ENCODE measurements at regions of chr15 and their contacts with region 1.

Region 1: GRCh38 chr15:58980351-58980939 is 7.0 kb upstream of the RNF111 start:
- DNase-seq: no peak
- ATAC-seq: peak; percentile 39
- H3K4me3 ChIP-seq: peak overlapping the region; percentile 37
- H3K27ac ChIP-seq: peak overlapping the region; percentile 83; the same call in 1 of the 2 replicates
- H3K4me1 ChIP-seq: peaks cover 34% of the 10 kb centered on the region
- H3K27me3 ChIP-seq: no peaks in the 10 kb centered on the region
- CTCF ChIP-seq: peak; percentile 19 to 60 (median 43); a peak in 3 of 6 replicates
- EP300 ChIP-seq: no peak
- POLR2A ChIP-seq: no peak
- RAD21 ChIP-seq: peak; percentile 67

Region 2: DNA sequence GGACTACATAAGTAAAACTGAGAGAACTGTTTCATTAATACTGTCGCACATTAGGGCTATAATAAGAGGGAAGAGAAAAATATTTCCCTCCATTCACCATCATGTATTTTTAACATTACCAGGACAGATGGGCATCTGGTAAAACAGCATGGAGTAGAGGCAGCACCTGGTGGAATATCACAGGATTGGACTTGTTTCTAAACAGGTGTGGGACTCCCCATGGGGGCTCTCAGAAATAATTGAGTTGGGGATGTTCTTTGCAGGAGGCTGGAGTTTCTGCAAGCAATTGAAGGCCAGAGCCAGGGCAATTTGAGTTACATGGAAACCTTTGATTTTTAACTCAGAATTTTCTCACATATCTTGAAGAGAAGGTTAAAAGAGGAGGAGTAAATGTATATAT is 217.7 kb before region 1 on chr15:
- CTCF ChIA-PET with region 1: no interaction called
- POLR2A ChIA-PET with region 1: no interaction called
- RAD21 ChIA-PET with region 1: no interaction called
- SMC1A ChIA-PET with region 1: no interaction called
- in situ Hi-C with region 1: no loop called
- intact Hi-C with region 1: no loop called
- DNase-seq: no peak
- ATAC-seq: no peak
- H3K4me3 ChIP-seq: no peak overlapping the region
- H3K27ac ChIP-seq: no peak overlapping the region
- H3K4me1 ChIP-seq: no peaks in the 10 kb centered on the region
- H3K27me3 ChIP-seq: no peaks in the 10 kb centered on the region
- CTCF ChIP-seq: no peak
- EP300 ChIP-seq: no peak
- POLR2A ChIP-seq: no peak
- RAD21 ChIP-seq: no peak

Region 3: DNA sequence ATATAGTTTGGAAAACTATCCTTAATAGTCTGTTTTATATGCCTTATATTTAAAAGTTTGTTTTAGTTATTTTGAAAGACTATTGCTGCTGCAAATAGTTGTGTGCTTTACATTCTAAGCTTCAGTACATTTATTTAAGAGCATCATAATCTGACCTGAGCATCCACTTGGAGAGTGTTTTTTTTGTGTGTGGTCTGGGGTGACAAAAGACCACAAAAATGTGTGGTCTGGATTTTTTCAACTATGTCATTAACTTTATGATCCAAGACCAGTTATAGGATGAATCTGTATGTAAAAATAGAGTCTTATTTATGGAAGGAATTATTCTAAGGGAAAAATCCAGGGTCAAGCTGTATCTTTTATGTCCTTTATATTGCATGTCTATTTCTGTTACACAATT is 124.4 kb before region 1 on chr15:
- CTCF ChIA-PET with region 1: no interaction called
- POLR2A ChIA-PET with region 1: no interaction called
- RAD21 ChIA-PET with region 1: no interaction called
- SMC1A ChIA-PET with region 1: no interaction called
- in situ Hi-C with region 1: no loop called
- intact Hi-C with region 1: no loop called
- DNase-seq: no peak
- ATAC-seq: no peak
- H3K4me3 ChIP-seq: no peak overlapping the region
- H3K27ac ChIP-seq: no peak overlapping the region
- H3K4me1 ChIP-seq: no peaks in the 10 kb centered on the region
- H3K27me3 ChIP-seq: no peaks in the 10 kb centered on the region
- CTCF ChIP-seq: no peak
- EP300 ChIP-seq: no peak
- POLR2A ChIP-seq: no peak
- RAD21 ChIP-seq: no peak

Region 4: DNA sequence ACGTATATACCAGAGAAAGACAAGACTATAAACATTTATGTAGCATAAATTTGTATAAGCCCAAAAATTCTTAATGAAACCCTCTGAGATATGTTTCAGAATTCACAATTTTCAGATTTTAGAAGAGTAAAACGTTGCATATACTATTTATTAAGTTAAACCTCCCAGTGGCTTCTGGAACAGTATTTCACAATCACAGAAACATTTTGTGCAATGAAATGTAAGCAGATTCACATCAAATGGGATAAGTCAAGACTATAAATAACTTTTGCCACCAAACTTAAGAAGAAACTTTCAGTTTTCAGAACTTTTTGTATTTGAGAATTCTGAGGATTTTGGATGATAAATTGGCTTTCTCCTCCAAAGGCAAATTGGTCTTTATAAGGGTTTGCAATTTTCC is 56.1 kb before region 1 on chr15:
- CTCF ChIA-PET with region 1: no interaction called
- POLR2A ChIA-PET with region 1: no interaction called
- RAD21 ChIA-PET with region 1: no interaction called
- SMC1A ChIA-PET with region 1: no interaction called
- in situ Hi-C with region 1: no loop called
- intact Hi-C with region 1: no loop called
- DNase-seq: no peak
- ATAC-seq: no peak
- H3K4me3 ChIP-seq: peak overlapping the region; percentile 7; the same call in 1 of the 2 replicates
- H3K27ac ChIP-seq: peak overlapping the region; percentile 14; the same call in 1 of the 2 replicates
- H3K4me1 ChIP-seq: peaks cover 2% of the 10 kb centered on the region; the same call in 1 of the 2 replicates
- H3K27me3 ChIP-seq: no peaks in the 10 kb centered on the region
- CTCF ChIP-seq: no peak
- EP300 ChIP-seq: no peak
- POLR2A ChIP-seq: no peak
- RAD21 ChIP-seq: no peak

Region 5: DNA sequence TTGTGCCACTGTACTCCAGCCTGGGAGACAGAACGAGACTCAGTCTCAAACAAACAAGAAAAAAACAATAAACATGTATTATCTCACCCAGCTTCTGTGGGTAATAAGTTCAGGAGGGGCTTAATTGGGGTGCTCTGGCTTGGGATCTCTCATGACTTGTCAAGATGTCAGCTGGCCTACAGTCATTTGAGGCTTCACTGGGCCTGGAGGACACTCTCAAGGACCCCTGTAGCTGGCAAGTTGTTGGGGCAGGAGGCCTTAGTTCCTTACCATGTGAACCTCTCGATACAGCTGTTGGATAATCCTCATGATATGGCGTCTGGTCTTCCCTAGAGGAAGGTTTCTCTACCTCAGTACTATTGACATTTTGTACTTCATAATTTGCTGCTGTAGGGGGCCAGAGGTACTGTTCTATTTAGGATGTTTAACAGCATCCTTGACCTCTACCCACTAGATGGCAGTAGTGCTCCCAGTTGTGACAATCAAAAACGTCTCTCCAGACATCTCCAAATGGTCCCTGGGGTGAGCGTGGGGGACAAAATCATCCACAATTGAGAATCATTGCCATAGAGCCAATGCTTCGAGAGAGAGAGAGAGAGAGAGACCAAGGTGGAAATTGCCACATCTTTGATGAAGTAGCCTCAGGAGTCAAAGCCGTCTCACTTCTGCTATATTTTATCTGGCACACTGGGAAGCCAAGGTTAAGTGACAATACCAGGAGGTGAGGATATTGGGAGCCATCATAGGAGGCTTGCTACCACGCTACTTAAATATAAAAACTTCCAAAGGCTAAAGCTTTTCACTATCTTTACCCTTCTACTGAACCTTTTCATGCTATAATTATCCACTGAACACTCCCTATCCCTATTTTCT is 23.1 kb before region 1 on chr15:
- CTCF ChIA-PET with region 1: interaction called, 16 read pairs
- POLR2A ChIA-PET with region 1: no interaction called
- RAD21 ChIA-PET with region 1: interaction called, 4 read pairs
- SMC1A ChIA-PET with region 1: interaction called, 11 read pairs
- in situ Hi-C with region 1: no loop called
- intact Hi-C with region 1: no loop called
- DNase-seq: no peak
- ATAC-seq: peak; percentile 98
- H3K4me3 ChIP-seq: no peak overlapping the region
- H3K27ac ChIP-seq: no peak overlapping the region
- H3K4me1 ChIP-seq: peaks cover 11% of the 10 kb centered on the region
- H3K27me3 ChIP-seq: no peaks in the 10 kb centered on the region
- CTCF ChIP-seq: peak; percentile 79 to 87 (median 81)
- EP300 ChIP-seq: no peak
- POLR2A ChIP-seq: no peak
- RAD21 ChIP-seq: peak; percentile 82

Region 6: DNA sequence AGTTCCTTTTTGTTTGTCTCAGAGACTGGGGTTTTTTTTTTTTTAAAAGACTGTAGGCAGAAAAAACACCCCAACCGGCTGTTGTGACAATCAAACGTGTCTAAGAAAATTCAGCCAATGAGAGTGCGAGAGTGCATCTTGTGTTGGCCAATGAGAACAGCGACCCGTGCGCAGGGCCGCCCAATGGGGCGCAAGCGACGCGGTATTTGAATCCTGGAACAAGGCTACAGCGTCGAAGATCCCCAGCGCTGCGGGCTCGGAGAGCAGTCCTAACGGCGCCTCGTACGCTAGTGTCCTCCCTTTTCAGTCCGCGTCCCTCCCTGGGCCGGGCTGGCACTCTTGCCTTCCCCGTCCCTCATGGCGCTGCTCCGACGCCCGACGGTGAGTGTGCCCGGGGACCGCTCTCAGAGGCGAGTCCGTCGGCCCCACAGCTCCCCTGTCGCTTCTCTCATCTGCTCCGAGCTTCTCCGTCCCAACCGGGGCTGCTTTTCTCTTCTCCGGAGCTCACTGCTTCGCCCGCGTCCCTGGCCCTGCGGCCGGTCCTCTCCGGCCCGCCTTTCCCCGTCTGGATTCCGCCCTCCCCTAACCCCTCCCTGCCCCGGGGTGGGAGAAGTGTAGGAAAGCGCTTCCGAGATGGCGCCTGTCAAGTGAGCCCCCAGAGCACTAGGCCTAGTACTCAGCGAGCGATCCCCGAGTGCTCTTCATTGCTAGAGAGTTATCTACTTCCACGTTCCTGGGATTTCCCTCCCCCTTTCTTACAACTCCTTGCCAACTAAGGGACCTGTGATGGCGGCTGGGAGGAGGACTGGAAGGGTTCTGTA is 124.7 kb after region 1 on chr15 and contains the start of gene CCNB2:
- CTCF ChIA-PET with region 1: interaction called, 17 read pairs
- POLR2A ChIA-PET with region 1: no interaction called
- RAD21 ChIA-PET with region 1: interaction called, 10 read pairs
- SMC1A ChIA-PET with region 1: interaction called, 10 read pairs
- in situ Hi-C with region 1: no loop called
- intact Hi-C with region 1: loop called (anchors 2 kb)
- DNase-seq: peak; percentile 85
- ATAC-seq: peak; percentile 100
- H3K4me3 ChIP-seq: peak within 1 kb of the TSS; percentile 95
- H3K27ac ChIP-seq: peak within 1 kb of the TSS; percentile 86
- H3K4me1 ChIP-seq: peaks cover 4% of the 10 kb centered on the region; the same call in 1 of the 2 replicates
- H3K27me3 ChIP-seq: no peaks in the 10 kb centered on the region
- CTCF ChIP-seq: no peak
- EP300 ChIP-seq: no peak
- POLR2A ChIP-seq: peak; percentile 98
- RAD21 ChIP-seq: no peak
- polyA plus RNA-seq, gene CCNB2: 205 to 211 TPM

Region 7: GRCh38 chr15:59484399-59484798 is 504.0 kb after region 1 on chr15:
- CTCF ChIA-PET with region 1: interaction called, 5 read pairs
- POLR2A ChIA-PET with region 1: interaction called, 5 read pairs
- RAD21 ChIA-PET with region 1: interaction called, 10 read pairs
- SMC1A ChIA-PET with region 1: interaction called, 6 read pairs
- in situ Hi-C with region 1: no loop called
- intact Hi-C with region 1: no loop called
- DNase-seq: no peak
- ATAC-seq: no peak
- H3K4me3 ChIP-seq: no peak overlapping the region
- H3K27ac ChIP-seq: no peak overlapping the region
- H3K4me1 ChIP-seq: peaks cover 15% of the 10 kb centered on the region
- H3K27me3 ChIP-seq: no peaks in the 10 kb centered on the region
- CTCF ChIP-seq: no peak
- EP300 ChIP-seq: no peak
- POLR2A ChIP-seq: no peak
- RAD21 ChIP-seq: no peak

Region 8: GRCh38 chr15:59516655-59517461 is 536.4 kb after region 1 on chr15:
- CTCF ChIA-PET with region 1: interaction called, 4 read pairs
- POLR2A ChIA-PET with region 1: interaction called, 4 read pairs
- RAD21 ChIA-PET with region 1: interaction called, 6 read pairs
- SMC1A ChIA-PET with region 1: interaction called, 7 read pairs
- in situ Hi-C with region 1: no loop called
- intact Hi-C with region 1: loop called (anchors 5 kb)
- DNase-seq: no peak
- ATAC-seq: peak; percentile 83
- H3K4me3 ChIP-seq: peak overlapping the region; percentile 35
- H3K27ac ChIP-seq: peak overlapping the region; percentile 93
- H3K4me1 ChIP-seq: peaks cover 27% of the 10 kb centered on the region
- H3K27me3 ChIP-seq: no peaks in the 10 kb centered on the region
- CTCF ChIP-seq: no peak
- EP300 ChIP-seq: no peak
- POLR2A ChIP-seq: no peak
- RAD21 ChIP-seq: no peak